ENCODE measurements at regions of chr5 and their contacts with region 1.

Region 1: GRCh38 chr5:170278611-170279452 is 18.7 kb downstream of the LCP2 start:
- DNase-seq: peak; percentile 97
- ATAC-seq: peak; percentile 76
- H3K4me3 Mint-ChIP-seq: peak overlapping the region; percentile 43
- H3K27ac Mint-ChIP-seq: peak overlapping the region; percentile 96
- H3K4me1 Mint-ChIP-seq: peaks cover 93% of the 10 kb centered on the region
- H3K27me3 Mint-ChIP-seq: no peaks in the 10 kb centered on the region
- CTCF ChIP-seq: no peak

Region 2: DNA sequence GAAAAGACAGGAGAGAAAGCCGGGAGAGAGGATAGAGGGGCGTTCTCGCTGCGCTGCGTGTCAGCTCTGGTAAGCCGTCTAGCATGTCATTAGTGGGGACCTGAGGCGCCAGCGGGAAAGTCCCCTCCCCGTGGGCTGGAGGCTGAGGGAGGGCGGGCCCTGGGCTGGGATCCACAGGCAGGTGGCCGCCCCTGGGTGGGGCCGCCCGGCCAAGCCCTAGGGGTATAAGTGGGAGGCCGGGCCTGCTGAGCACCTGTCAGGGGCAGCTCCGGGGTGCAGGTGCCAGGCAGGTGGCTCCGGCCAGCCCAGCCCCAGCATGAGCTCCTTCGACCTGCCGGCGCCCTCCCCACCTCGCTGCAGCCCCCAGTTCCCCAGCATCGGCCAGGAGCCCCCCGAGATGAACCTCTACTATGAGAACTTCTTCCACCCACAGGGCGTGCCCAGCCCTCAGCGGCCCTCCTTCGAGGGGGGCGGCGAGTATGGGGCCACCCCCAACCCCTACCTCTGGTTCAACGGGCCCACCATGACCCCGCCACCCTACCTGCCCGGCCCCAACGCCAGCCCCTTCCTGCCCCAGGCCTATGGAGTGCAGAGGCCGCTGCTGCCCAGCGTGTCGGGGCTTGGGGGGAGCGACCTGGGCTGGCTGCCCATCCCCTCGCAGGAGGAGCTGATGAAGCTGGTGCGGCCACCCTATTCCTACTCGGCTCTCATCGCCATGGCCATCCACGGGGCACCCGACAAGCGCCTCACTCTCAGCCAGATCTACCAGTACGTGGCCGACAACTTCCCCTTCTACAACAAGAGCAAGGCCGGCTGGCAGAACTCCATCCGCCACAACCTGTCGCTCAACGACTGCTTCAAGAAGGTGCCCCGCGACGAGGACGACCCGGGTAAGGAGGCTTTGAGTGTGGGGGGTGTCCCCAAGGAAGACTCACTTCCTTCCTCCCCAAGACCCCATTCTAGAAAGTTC is 172.9 kb before region 1 on chr5 and contains the start of gene FOXI1:
- CTCF ChIA-PET with region 1: no interaction called
- POLR2A ChIA-PET with region 1: no interaction called
- intact Hi-C with region 1: no loop called
- DNase-seq: no peak
- ATAC-seq: no peak
- H3K4me3 Mint-ChIP-seq: no peak within 1 kb of the TSS
- H3K27ac Mint-ChIP-seq: no peak within 1 kb of the TSS
- H3K4me1 Mint-ChIP-seq: no peaks in the 10 kb centered on the region
- H3K27me3 Mint-ChIP-seq: peaks cover 4% of the 10 kb centered on the region
- CTCF ChIP-seq: no peak
- total RNA-seq, gene FOXI1: not detected

Region 3: DNA sequence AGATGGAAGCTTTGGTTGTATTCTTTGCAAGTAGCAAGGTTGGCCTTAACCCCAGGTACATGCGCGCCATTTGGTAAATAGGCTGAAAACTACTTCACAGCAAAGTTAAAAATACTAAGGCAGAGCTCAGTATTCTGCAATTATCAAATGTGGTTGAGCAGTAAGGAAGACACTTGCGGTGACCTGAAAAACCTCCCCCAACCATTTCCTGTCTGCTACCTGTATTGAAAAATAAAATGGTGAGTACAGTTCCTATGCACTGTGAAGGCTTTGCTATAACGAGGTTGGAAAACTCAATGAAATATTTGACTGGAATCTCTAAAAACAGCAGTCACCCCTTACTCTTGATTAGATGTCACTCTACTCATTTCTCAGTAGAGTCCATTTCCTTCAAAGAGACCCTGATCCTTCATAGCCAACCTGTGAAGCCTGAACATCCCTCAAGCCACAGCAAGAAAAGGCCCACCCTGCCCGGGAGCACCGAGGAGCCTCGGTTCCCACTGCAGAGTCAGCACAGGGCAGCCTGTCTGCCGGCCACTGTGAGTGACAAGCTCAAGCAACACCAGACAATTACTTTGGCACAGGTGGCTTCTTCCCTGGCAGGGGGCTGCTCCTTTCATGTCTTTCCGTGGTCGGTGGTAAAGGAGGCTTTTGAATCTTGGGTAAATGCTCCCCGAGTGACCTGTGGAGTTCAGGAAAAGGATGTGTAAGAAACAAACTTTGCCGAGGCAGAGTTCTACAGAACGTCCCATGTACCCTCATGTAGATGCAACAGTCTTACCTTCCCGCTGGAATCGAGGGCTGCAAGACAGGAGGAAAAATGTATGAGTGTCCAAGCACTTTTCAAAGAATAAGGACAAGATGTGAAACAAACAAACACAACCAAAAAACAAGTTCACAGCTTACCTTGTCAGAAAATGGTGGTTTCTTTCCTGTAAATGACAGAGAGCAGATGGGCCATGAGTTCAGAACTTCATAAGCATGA is 16.5 kb before region 1 on chr5:
- CTCF ChIA-PET with region 1: interaction called, 63 read pairs
- POLR2A ChIA-PET with region 1: interaction called, 64 read pairs
- intact Hi-C with region 1: no loop called
- DNase-seq: peak; percentile 60
- ATAC-seq: peak; percentile 25
- H3K4me3 Mint-ChIP-seq: peak overlapping the region; percentile 47
- H3K27ac Mint-ChIP-seq: peak overlapping the region; percentile 96
- H3K4me1 Mint-ChIP-seq: peaks cover 91% of the 10 kb centered on the region
- H3K27me3 Mint-ChIP-seq: no peaks in the 10 kb centered on the region
- CTCF ChIP-seq: no peak

Region 4: DNA sequence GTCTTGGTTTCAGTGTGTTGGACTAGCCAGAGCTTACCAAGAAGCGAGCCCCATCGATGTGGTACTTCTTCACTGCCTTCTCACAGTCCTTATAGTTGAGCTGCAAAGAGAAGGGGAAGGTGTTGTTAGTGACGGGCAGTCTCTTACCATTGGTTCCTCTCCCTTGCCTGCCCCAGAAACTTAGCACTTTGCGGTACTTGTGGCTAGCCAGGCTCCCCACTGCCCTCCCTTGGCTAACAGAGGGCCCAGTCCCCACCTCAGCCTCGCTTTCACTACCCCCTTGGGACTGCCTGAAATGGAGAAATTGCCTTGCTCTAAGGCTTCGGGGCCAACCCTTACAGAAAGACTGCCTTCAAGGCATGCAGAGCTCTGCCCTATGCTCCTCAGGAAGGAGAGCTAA is 14.4 kb after region 1 on chr5:
- CTCF ChIA-PET with region 1: interaction called, 180 read pairs
- POLR2A ChIA-PET with region 1: interaction called, 470 read pairs
- intact Hi-C with region 1: loop called (anchors 2 kb)
- DNase-seq: peak; percentile 89
- ATAC-seq: peak; percentile 43
- H3K4me3 Mint-ChIP-seq: peak overlapping the region; percentile 97
- H3K27ac Mint-ChIP-seq: peak overlapping the region; percentile 96
- H3K4me1 Mint-ChIP-seq: peaks cover 61% of the 10 kb centered on the region
- H3K27me3 Mint-ChIP-seq: no peaks in the 10 kb centered on the region
- CTCF ChIP-seq: no peak

Region 5: GRCh38 chr5:170302653-170303501 is 24.0 kb after region 1 on chr5:
- CTCF ChIA-PET with region 1: interaction called, 180 read pairs
- POLR2A ChIA-PET with region 1: interaction called, 470 read pairs
- intact Hi-C with region 1: no loop called
- DNase-seq: peak; percentile 71
- ATAC-seq: peak; percentile 87
- H3K4me3 Mint-ChIP-seq: peak overlapping the region; percentile 80
- H3K27ac Mint-ChIP-seq: peak overlapping the region; percentile 98
- H3K4me1 Mint-ChIP-seq: peaks cover 86% of the 10 kb centered on the region
- H3K27me3 Mint-ChIP-seq: no peaks in the 10 kb centered on the region
- CTCF ChIP-seq: peak; percentile 21

Measured in activated CD8-positive, alpha-beta T cell treated with anti-CD3 and anti-CD28 coated beads for 36 hours (primary cell).